BJ (cell line): ENCODE measurements at regions of chr1 and their contacts with region 1.

Region 1: GRCh38 chr1:33295450-33296081 is 25.3 kb downstream of the A3GALT2 start:
- DNase-seq: no peak
- H3K4me3 ChIP-seq: no peak overlapping the region
- H3K27me3 ChIP-seq: no peaks in the 10 kb centered on the region
- CTCF ChIP-seq: peak; percentile 92

Region 2: GRCh38 chr1:33219881-33220661 is 75.5 kb before region 1 on chr1:
- CTCF ChIA-PET with region 1: interaction called, 19 read pairs
- POLR2A ChIA-PET with region 1: no interaction called
- DNase-seq: no peak
- H3K4me3 ChIP-seq: no peak overlapping the region
- H3K27me3 ChIP-seq: no peaks in the 10 kb centered on the region
- CTCF ChIP-seq: no peak

Region 3: GRCh38 chr1:33248216-33248835 is 47.2 kb before region 1 on chr1:
- CTCF ChIA-PET with region 1: no interaction called
- POLR2A ChIA-PET with region 1: no interaction called
- DNase-seq: no peak
- H3K4me3 ChIP-seq: no peak overlapping the region
- H3K27me3 ChIP-seq: peaks cover 2% of the 10 kb centered on the region; the same call in 1 of the 2 replicates
- CTCF ChIP-seq: no peak

Region 4: DNA sequence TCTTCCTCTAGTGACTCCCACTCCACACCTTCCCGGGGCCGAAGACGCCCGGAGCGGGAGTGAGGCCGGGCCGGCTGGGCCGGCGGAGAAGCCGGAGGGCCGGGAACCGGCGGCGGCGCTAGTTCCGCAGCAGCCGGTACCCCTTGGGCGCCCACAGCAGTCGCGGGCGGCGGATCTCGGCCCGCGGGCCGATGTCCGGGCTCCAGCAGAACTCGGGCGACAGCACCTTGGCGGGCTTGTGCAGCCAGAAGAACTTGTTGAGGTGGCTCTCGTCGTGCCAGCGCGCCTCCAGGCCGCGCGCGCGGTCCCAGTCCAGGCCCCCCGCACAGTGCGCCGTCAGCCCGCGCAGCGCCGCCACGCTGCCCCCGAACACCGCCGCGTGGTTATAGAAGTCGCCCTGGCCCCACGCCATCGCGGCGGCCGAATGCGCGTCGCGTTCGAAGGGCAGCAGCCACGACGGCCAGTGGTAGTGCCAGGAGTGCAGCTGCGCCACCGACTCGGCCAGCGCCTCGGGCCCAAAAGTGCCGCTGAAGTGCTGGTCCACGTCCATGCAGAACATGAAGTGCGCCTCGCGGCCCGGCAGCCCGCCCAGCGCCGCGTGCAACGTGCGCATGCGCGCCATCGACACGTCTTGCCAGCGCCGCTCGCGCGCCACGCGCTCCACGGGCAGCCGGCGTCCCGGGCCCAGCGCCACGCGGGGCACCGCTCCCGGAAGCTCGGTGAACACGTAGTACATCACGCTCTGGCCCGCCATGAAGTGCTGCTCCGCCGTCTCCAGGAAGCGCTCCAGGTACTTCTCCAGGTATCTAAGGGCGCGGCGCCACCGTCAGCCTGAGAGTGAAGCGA is 11.3 kb after region 1 on chr1:
- CTCF ChIA-PET with region 1: interaction called, 28 read pairs
- POLR2A ChIA-PET with region 1: no interaction called
- DNase-seq: no peak
- H3K4me3 ChIP-seq: no peak overlapping the region
- H3K27me3 ChIP-seq: no peaks in the 10 kb centered on the region; the same call in 1 of the 2 replicates
- CTCF ChIP-seq: no peak

Region 5: GRCh38 chr1:33367485-33368405 is 72.2 kb after region 1 on chr1:
- CTCF ChIA-PET with region 1: interaction called, 203 read pairs
- POLR2A ChIA-PET with region 1: no interaction called
- DNase-seq: no peak
- H3K4me3 ChIP-seq: no peak overlapping the region
- H3K27me3 ChIP-seq: no peaks in the 10 kb centered on the region
- CTCF ChIP-seq: peak; percentile 97

Region 6: GRCh38 chr1:33455539-33456501 is 160.3 kb after region 1 on chr1:
- CTCF ChIA-PET with region 1: interaction called, 80 read pairs
- POLR2A ChIA-PET with region 1: no interaction called
- DNase-seq: peak; percentile 56
- H3K4me3 ChIP-seq: no peak overlapping the region
- H3K27me3 ChIP-seq: no peaks in the 10 kb centered on the region
- CTCF ChIP-seq: peak; percentile 88

Region 7: GRCh38 chr1:33610864-33611455 is 315.4 kb after region 1 on chr1:
- CTCF ChIA-PET with region 1: interaction called, 19 read pairs
- POLR2A ChIA-PET with region 1: no interaction called
- DNase-seq: no peak
- H3K4me3 ChIP-seq: no peak overlapping the region
- H3K27me3 ChIP-seq: no peaks in the 10 kb centered on the region; the same call in 1 of the 2 replicates
- CTCF ChIP-seq: no peak

Region 8: GRCh38 chr1:33624991-33625870 is 329.7 kb after region 1 on chr1:
- CTCF ChIA-PET with region 1: no interaction called
- POLR2A ChIA-PET with region 1: no interaction called
- DNase-seq: no peak
- H3K4me3 ChIP-seq: no peak overlapping the region
- H3K27me3 ChIP-seq: no peaks in the 10 kb centered on the region
- CTCF ChIP-seq: peak; percentile 38